Activated naive CD4-positive, alpha-beta T cell treated with anti-CD3 and anti-CD28 coated beads for 36 hours (primary cell): ENCODE measurements at regions of chr12 and their contacts with region 1.

Region 1: GRCh38 chr12:105382771-105383622 is 52.5 kb downstream of the C12orf75 start:
- DNase-seq: peak; percentile 31
- H3K4me3 Mint-ChIP-seq: no peak overlapping the region
- H3K27ac Mint-ChIP-seq: no peak overlapping the region
- H3K4me1 Mint-ChIP-seq: no peaks in the 10 kb centered on the region
- H3K27me3 Mint-ChIP-seq: no peaks in the 10 kb centered on the region

Region 2: DNA sequence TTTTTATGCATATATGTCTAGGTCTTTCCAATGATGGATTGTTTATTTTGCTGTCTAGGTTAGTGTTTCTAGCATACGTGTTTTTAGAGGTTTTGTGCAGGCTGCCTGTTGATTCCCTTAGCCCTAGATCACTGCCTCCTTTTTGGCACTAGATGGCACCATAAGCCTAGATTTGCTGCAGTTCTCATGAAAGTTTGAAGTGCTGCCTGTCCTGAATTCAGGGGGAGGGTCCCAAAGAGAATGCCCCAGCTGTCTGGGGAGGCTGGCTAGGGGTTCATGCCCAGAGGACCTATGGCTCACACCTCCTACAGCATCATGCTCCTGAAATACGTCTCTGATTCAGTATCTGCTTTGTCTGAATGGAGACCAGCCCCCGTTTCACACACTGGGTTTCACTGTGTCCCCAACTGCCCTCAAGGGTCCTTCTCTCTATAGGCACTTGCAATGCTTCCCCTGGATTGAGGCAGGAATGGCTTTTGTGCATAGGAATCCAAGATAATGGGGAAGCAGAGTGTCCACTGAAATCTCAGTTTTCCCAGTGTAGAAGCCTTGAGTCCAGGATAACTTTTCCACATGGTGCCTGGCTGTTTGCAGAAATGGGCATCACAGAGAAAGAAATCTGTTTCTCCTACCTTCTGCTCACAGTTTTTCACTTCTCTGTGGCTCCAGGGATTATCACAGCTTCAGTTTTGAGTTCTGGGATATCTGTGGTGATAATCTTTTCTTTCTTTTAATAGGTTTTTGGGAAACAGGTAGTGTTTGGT is 1181.6 kb before region 1 on chr12:
- CTCF ChIA-PET with region 1: no interaction called
- intact Hi-C with region 1: loop called (anchors 5 kb)
- DNase-seq: peak; percentile 64
- H3K4me3 Mint-ChIP-seq: no peak overlapping the region
- H3K27ac Mint-ChIP-seq: no peak overlapping the region
- H3K4me1 Mint-ChIP-seq: peaks cover 2% of the 10 kb centered on the region
- H3K27me3 Mint-ChIP-seq: peaks cover 7% of the 10 kb centered on the region

Region 3: GRCh38 chr12:104966677-104967076 is 416.3 kb before region 1 on chr12:
- CTCF ChIA-PET with region 1: no interaction called
- intact Hi-C with region 1: no loop called
- DNase-seq: no peak
- H3K4me3 Mint-ChIP-seq: no peak overlapping the region
- H3K27ac Mint-ChIP-seq: no peak overlapping the region
- H3K4me1 Mint-ChIP-seq: no peaks in the 10 kb centered on the region
- H3K27me3 Mint-ChIP-seq: peaks cover 14% of the 10 kb centered on the region

Region 4: GRCh38 chr12:105279460-105280056 is 103.4 kb before region 1 on chr12:
- CTCF ChIA-PET with region 1: interaction called, 9 read pairs
- intact Hi-C with region 1: loop called (anchors 1 kb)
- DNase-seq: peak; percentile 66
- H3K4me3 Mint-ChIP-seq: no peak overlapping the region
- H3K27ac Mint-ChIP-seq: no peak overlapping the region
- H3K4me1 Mint-ChIP-seq: no peaks in the 10 kb centered on the region
- H3K27me3 Mint-ChIP-seq: peaks cover 7% of the 10 kb centered on the region

Region 5: GRCh38 chr12:105321125-105321524 is 61.9 kb before region 1 on chr12:
- CTCF ChIA-PET with region 1: interaction called, 3 read pairs
- intact Hi-C with region 1: loop called (anchors 1 kb)
- DNase-seq: no peak
- H3K4me3 Mint-ChIP-seq: no peak overlapping the region
- H3K27ac Mint-ChIP-seq: no peak overlapping the region
- H3K4me1 Mint-ChIP-seq: peaks cover 4% of the 10 kb centered on the region
- H3K27me3 Mint-ChIP-seq: no peaks in the 10 kb centered on the region